Activated CD4-positive, alpha-beta T cell treated with anti-CD3 and anti-CD28 coated beads, Interleukin-2, amount 10 ng/mL, durations not matched to agents 7 days and 5 days (primary cell): ENCODE measurements at regions of chr16 and their contacts with region 1.

Region 1: GRCh38 chr16:11094072-11094856 is 149.9 kb downstream of the CLEC16A start:
- DNase-seq: peak; percentile 74
- H3K4me3 Mint-ChIP-seq: peak overlapping the region; percentile 35
- H3K27ac Mint-ChIP-seq: peak overlapping the region; percentile 88
- H3K4me1 Mint-ChIP-seq: peaks cover 88% of the 10 kb centered on the region
- H3K27me3 Mint-ChIP-seq: no peaks in the 10 kb centered on the region

Region 2: DNA sequence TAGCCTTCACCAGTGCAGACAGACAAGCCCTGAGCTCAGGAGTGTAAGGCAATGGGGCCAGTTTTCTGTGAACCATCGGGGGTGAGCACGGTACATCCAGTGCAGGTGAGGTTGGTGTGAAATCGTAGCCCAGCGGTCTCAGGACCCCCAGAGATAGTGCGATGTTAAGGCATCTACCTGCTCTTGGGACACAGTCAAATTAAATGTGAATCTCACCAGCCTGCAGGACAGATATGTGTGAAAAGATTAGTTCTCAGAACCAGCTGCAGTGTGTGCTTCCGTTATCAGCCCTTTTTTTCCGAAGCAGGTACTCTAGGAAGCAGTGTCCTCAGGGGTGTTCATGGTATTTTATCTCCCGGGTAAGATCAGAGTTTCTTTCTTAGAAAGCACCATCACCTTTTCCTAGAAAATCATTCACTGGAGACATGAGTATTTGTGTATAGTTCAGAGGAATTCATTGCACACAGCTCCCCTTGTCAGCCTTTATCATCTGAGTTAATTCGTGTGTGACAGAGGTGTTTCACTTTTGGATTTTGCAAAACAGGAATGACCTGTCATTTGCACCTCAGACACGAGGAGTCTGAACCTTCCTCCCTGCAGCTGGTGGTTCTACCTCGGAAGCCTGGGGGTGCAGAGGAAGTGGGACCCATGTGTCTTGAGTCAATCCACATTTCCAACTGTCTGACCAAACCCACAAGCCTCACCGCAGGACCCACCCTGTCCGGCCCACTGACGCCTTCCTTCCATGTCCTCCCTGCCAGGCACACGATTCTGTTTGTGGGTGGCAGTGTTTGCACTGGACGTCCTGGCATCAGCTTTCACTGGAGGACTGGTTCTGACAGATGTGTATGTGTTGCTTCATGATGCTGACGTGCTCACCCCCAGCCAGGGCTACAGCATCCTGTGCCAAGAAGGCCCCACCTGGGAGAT is 42.1 kb before region 1 on chr16:
- CTCF ChIA-PET with region 1: interaction called, 14 read pairs
- POLR2A ChIA-PET with region 1: interaction called, 7 read pairs
- DNase-seq: peak; percentile 79
- H3K4me3 Mint-ChIP-seq: peak overlapping the region; percentile 32
- H3K27ac Mint-ChIP-seq: peak overlapping the region; percentile 90
- H3K4me1 Mint-ChIP-seq: peaks cover 86% of the 10 kb centered on the region
- H3K27me3 Mint-ChIP-seq: no peaks in the 10 kb centered on the region

Region 3: DNA sequence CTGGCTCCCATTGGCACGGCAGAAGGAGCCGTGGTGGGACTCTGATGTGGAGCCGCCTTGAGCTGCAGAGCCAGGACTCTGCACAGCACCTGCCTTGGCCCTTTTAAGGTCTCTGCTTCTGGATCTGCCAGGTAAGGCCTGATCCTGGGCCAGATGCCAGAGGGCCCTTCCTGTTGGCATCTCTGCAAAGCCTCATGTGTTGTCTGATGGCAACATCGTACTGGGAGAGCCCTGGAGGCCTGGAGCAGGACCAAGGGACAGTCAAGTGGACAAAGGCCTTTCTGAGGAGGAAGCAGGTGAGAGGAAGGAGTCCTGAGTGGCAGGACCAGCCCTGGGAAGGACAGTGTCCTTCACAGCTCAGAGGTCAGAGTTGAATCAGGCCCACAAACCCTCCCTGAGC is 135.6 kb after region 1 on chr16:
- CTCF ChIA-PET with region 1: no interaction called
- POLR2A ChIA-PET with region 1: no interaction called
- DNase-seq: no peak
- H3K4me3 Mint-ChIP-seq: no peak overlapping the region
- H3K27ac Mint-ChIP-seq: peak overlapping the region; percentile 59
- H3K4me1 Mint-ChIP-seq: peaks cover 92% of the 10 kb centered on the region
- H3K27me3 Mint-ChIP-seq: no peaks in the 10 kb centered on the region